ENCODE measurements at regions of chrX and their contacts with region 1.

Region 1: GRCh38 chrX:77793950-77794349 is 7.9 kb upstream of the ATRX start:
- DNase-seq: no peak
- ATAC-seq: no peak
- H3K4me3 ChIP-seq: no peak overlapping the region
- H3K27ac ChIP-seq: no peak overlapping the region
- H3K4me1 ChIP-seq: no peaks in the 10 kb centered on the region
- H3K27me3 ChIP-seq: no peaks in the 10 kb centered on the region
- CTCF ChIP-seq: no peak

Region 2: DNA sequence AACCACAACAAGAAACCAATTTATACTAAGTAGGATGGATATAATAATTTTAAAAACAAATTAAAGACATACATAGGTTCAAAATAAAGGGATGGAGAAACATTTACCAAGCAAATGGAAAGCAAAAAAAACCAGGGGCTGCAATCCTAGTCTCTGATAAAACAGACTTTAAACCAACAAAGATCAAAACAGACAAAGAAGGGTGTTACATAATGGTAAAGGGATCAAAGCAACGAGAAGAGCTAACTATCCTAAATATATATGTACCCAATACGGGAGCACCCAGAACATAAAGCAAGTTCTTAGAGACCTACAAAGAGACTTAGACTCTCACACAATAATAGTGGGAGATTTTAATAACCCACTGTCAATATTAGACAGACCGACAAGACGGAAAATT is 74.6 kb before region 1 on chrX:
- CTCF ChIA-PET with region 1: no interaction called
- POLR2A ChIA-PET with region 1: interaction called, 15 read pairs
- in situ Hi-C with region 1: no loop called
- intact Hi-C with region 1: no loop called
- DNase-seq: no peak
- ATAC-seq: no peak
- H3K4me3 ChIP-seq: no peak overlapping the region
- H3K27ac ChIP-seq: no peak overlapping the region
- H3K4me1 ChIP-seq: no peaks in the 10 kb centered on the region
- H3K27me3 ChIP-seq: no peaks in the 10 kb centered on the region
- CTCF ChIP-seq: no peak